BJ (cell line): ENCODE measurements at regions of chr12 and their contacts with region 1.

Region 1: DNA sequence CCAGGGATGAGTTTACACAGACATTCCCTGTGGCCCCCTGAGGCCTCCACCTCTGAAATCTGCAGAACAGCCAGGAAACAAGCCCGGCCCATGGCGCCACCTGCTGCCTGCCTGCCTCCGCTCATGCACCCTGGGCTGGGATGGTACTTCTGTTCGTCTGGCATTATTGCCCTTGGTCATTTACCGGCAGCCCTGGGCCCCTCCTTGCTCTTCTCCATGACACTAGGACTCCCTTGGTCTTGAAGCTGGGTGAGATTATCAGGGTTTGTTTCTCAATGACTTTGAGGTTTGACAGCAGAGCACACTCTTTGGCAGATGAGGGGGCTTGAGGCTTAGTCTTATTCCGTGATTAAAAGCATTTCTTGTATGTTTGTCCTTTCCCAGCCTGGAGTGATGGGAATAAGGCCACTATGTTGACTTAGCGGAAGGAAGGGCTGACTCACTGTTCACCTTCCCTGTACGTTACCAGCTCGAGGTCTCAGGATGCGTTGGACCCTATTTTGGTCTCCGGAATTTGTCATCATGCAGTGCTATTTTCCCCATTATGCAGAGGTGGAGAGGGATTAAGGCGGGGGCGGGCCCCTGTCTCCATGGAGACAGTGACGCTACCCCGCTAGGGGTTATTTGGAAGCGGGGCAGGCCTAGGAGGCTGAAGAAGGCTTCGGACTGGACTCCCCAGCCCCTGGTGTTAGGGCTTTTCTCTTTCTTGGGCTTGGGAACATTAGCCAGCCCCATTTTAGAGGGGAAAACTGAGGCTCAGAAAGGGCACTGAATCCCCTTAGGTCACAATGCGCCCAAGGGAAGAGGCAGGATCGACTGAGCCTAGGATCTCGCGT is 706 bp upstream of the PEX5 start:
- DNase-seq: peak; percentile 20
- H3K4me3 ChIP-seq: peak overlapping the region; percentile 96
- H3K27me3 ChIP-seq: no peaks in the 10 kb centered on the region
- CTCF ChIP-seq: peak; percentile 87

Region 2: DNA sequence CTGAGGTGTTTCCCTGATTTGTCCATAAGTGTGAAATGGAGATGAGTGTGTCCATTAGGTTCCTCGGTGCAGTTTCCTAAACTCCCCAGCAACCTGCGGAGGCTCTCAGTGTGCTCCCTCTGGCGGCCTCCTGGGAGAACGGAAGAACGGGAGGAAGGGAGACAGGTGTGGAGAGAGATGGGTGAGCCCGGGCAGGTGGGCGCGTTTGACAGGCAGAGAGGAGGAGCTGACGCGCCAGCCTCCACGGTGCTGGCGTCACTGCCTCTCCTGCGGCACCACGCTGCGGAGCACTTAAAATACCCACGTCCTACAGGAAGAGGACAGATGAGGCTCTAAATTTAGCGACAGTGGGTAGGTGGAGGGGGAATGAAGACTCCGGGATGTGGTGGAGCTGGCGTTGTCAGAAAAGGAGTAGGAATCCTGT is 26.1 kb before region 1 on chr12:
- CTCF ChIA-PET with region 1: interaction called, 10 read pairs
- POLR2A ChIA-PET with region 1: no interaction called
- DNase-seq: no peak
- H3K4me3 ChIP-seq: no peak overlapping the region
- H3K27me3 ChIP-seq: peaks cover 2% of the 10 kb centered on the region
- CTCF ChIP-seq: peak; percentile 76

Region 3: GRCh38 chr12:7175493-7175892 is 13.3 kb before region 1 on chr12:
- CTCF ChIA-PET with region 1: interaction called, 12 read pairs
- POLR2A ChIA-PET with region 1: no interaction called
- DNase-seq: no peak
- H3K4me3 ChIP-seq: no peak overlapping the region
- H3K27me3 ChIP-seq: no peaks in the 10 kb centered on the region
- CTCF ChIP-seq: no peak

Region 4: DNA sequence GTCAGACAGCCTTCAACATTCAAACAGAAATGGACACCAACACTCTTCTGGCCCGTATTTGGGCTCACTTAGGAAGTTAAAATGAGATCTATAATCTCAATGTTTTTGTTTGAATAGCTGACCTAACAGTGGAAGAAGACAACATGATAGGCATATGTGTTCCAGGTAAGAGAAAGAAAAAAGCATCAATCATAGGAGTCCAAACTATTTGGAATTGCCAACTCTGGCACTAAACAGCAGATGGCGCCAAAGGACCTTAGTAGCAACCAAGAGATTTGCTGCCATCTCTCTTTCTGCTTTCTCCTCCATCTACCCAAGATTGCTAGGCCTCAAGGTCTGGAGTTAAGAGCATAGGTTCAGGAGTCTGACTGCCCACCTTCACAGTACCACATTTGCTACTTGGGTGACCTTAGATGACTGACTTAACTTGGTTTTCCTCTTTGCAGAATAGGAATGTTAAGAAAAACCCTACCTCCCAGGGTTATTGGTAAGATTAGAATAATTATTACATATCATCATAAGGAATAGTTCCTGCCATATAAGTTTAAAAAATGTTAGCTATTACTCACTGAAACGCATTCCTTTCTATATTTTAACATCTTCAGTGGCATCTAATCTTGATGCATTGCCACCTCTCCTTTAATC is 30.9 kb after region 1 on chr12:
- CTCF ChIA-PET with region 1: no interaction called
- POLR2A ChIA-PET with region 1: no interaction called
- DNase-seq: no peak
- H3K4me3 ChIP-seq: no peak overlapping the region
- H3K27me3 ChIP-seq: peaks cover 3% of the 10 kb centered on the region; the same call in 1 of the 2 replicates
- CTCF ChIP-seq: peak; percentile 87